ENCODE measurements at regions of chr4 and their contacts with region 1.

Region 1: DNA sequence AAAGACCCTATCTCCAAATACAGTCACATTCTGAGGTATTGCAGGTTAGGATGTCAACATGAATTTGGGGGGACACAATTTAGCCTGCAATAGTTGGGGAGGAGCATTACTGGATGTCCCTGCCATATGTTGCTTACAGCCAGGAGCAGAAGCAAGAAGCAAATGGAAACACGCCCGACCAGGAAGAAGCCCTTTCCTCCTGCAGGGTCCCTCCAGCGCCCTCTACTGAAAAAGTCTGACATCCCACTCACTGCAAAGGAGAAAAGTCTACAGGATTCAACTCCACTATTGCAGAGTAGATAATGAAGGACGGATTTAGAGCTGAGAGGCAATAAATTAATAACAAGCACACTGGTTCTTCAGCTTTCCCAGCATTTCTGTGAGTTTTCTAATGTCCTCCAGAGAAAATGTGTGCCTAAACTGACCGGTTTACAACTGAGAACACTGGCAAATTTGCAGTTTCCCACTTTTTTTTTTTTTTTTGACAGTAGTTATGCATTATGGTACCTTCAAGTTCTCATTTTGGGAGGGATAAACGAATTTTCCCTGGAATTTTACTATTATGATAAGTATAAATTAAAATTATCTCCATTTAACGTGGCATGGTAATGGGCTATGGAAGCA is 31.7 kb downstream of the COQ2 start:
- DNase-seq: peak; percentile 80 to 90 (median 86)
- H3K4me3 ChIP-seq: no peak overlapping the region
- H3K27ac ChIP-seq: no peak overlapping the region
- H3K4me1 ChIP-seq: peaks cover 0 to 11% (median 5%) of the 10 kb centered on the region in 4 experiments
- H3K27me3 ChIP-seq: no peaks in the 10 kb centered on the region

Region 2: DNA sequence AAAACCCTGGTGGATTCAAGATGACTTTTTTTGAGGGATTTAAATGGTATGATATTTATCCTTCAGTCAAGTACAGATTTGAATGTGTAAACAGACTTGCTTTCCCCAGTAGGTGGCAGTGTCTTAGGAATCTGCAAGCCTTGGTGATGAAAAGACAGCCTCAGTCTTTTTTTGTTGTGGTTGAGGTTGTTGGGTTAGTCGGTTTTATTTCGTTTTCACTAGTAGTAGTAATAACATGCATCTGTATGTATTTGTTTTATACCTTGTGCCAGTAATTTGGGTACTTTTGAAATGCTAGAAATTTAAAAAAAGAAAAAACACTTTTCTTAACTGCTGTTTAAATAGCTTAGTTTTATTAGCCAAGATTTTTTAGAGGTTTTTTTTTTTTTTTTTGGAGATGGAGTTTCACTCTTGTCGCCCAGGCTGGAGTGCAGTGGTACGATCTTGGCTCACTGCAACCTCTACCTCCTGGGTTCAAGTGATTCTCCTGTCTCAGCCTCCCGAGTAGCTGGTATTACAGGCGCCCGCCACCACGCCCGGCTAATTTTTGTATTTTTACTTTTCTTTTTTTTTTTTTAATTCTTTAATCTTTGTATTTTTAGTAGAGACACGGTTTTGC is 178.7 kb before region 1 on chr4:
- CTCF ChIA-PET with region 1: interaction called, 22 read pairs
- POLR2A ChIA-PET with region 1: no interaction called
- DNase-seq: peak; percentile 91 to 95 (median 95)
- H3K4me3 ChIP-seq: no peak overlapping the region
- H3K27ac ChIP-seq: no peak overlapping the region
- H3K4me1 ChIP-seq: peaks cover 3 to 15% (median 12%) of the 10 kb centered on the region in 4 experiments
- H3K27me3 ChIP-seq: no peaks in the 10 kb centered on the region

Region 3: DNA sequence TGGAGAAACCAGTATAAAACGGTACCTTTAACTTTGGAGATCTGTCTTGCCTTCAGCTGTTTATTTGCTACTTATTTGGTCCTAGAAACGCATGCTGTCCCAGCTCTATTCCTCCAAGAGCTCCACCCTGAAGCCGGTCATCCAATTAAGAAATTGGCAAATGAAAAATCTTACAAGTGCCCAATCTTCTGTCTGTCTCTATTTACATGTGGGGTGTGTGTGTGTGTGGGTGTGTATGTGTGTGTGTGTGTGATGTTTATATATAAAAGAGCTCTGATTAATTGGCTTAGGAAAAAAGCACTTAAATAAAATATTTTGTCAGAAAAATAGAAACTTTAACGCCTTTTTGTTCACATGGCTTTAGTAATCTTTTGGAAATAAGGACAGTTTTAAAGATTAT is 155.9 kb before region 1 on chr4:
- CTCF ChIA-PET with region 1: interaction called, 10 read pairs
- POLR2A ChIA-PET with region 1: interaction called, 3 read pairs
- DNase-seq: no peak
- H3K4me3 ChIP-seq: no peak overlapping the region
- H3K27ac ChIP-seq: no peak overlapping the region
- H3K4me1 ChIP-seq: no peaks in the 10 kb centered on the region
- H3K27me3 ChIP-seq: no peaks in the 10 kb centered on the region

Region 4: GRCh38 chr4:83237591-83237990 is 15.3 kb before region 1 on chr4:
- CTCF ChIA-PET with region 1: interaction called, 13 read pairs
- POLR2A ChIA-PET with region 1: no interaction called
- DNase-seq: no peak
- H3K4me3 ChIP-seq: no peak overlapping the region
- H3K27ac ChIP-seq: no peak overlapping the region
- H3K4me1 ChIP-seq: peaks cover 4 to 19% (median 5%) of the 10 kb centered on the region in 4 experiments
- H3K27me3 ChIP-seq: no peaks in the 10 kb centered on the region